Activated naive CD4-positive, alpha-beta T cell treated with anti-CD3 and anti-CD28 coated beads for 36 hours (primary cell): ENCODE measurements at regions of chr10 and their contacts with region 1.

Region 1: DNA sequence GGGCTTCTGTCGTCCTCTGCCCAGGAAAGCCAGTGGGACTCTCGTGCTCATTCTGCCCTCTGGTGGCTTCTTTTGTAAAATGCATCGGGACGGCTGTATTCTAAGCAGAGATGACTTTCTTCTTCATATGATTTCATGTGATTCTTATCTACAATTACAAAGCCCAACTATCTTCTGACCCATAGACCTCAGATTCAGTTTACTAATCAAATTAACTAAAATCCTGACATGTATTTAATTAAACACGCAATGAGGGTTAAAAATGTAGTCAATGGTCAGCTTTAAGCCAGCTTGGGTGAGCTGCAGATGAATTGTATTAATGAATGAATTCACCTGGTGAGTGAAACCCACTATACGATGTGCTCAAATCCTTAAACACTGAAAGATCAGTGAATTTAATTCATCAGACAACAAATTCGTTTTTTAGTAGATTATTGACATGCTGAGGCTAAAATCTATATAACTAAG is 117.6 kb upstream of the FAM204A start:
- DNase-seq: peak; percentile 76
- H3K4me3 Mint-ChIP-seq: no peak overlapping the region
- H3K27ac Mint-ChIP-seq: no peak overlapping the region
- H3K4me1 Mint-ChIP-seq: peaks cover 5% of the 10 kb centered on the region
- H3K27me3 Mint-ChIP-seq: peaks cover 19% of the 10 kb centered on the region

Region 2: GRCh38 chr10:118341791-118342637 is 117.7 kb before region 1 on chr10 and contains the start of gene FAM204A:
- CTCF ChIA-PET with region 1: interaction called, 3 read pairs
- intact Hi-C with region 1: loop called (anchors 1 kb)
- DNase-seq: peak; percentile 98
- H3K4me3 Mint-ChIP-seq: peak within 1 kb of the TSS; percentile 95
- H3K27ac Mint-ChIP-seq: peak within 1 kb of the TSS; percentile 86
- H3K4me1 Mint-ChIP-seq: peaks cover 41% of the 10 kb centered on the region
- H3K27me3 Mint-ChIP-seq: no peaks in the 10 kb centered on the region
- total RNA-seq, gene FAM204A: 60.5 to 67.1 TPM

Region 3: DNA sequence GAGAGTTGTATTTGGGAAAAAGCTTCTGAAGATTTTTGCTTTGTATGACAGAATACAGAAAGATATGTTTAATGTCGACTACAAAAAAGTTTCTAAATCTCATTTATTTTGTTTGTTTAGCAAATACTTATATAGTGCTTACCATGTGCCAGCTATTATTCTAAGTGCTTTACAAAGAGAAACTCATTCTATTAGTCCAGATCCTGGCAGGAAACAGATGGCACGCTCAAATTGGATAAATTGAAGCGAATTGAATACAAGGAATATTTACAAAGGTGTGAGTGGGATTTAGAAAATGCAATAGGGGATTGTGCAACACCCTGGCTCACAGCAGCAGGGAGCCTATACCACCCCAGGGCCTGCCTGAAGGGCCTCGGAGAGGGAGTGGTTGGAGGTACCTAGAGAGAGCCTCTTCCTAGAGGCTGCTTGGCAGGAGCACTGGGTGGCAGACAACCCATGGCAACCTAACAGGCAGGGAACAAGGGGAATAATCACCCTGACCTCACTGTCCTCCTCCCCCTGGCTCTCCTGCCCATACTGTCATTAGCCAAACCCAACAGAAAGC is 90.0 kb before region 1 on chr10:
- CTCF ChIA-PET with region 1: no interaction called
- intact Hi-C with region 1: no loop called
- DNase-seq: no peak
- H3K4me3 Mint-ChIP-seq: no peak overlapping the region
- H3K27ac Mint-ChIP-seq: no peak overlapping the region
- H3K4me1 Mint-ChIP-seq: no peaks in the 10 kb centered on the region
- H3K27me3 Mint-ChIP-seq: peaks cover 18% of the 10 kb centered on the region

Region 4: DNA sequence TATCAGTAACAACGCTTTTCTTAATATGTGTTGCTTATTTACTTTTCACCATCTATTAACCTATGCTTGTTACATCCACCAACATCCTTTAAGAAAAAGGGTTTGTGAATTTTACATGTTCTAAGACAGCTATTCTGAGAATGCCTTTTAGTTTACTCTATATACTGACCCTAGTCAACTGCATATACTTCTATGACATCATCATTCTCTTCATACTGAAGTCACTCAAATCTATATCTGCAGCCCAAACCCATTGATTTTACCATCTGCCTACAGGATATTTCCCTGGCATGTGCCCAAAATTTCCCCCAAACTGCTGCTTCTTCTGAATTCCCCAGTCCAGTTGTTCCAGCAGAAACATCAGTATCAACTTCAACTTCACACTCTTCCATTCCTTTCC is 23.0 kb before region 1 on chr10:
- CTCF ChIA-PET with region 1: interaction called, 14 read pairs
- intact Hi-C with region 1: no loop called
- DNase-seq: no peak
- H3K4me3 Mint-ChIP-seq: no peak overlapping the region
- H3K27ac Mint-ChIP-seq: no peak overlapping the region
- H3K4me1 Mint-ChIP-seq: no peaks in the 10 kb centered on the region
- H3K27me3 Mint-ChIP-seq: peaks cover 35% of the 10 kb centered on the region

Region 5: DNA sequence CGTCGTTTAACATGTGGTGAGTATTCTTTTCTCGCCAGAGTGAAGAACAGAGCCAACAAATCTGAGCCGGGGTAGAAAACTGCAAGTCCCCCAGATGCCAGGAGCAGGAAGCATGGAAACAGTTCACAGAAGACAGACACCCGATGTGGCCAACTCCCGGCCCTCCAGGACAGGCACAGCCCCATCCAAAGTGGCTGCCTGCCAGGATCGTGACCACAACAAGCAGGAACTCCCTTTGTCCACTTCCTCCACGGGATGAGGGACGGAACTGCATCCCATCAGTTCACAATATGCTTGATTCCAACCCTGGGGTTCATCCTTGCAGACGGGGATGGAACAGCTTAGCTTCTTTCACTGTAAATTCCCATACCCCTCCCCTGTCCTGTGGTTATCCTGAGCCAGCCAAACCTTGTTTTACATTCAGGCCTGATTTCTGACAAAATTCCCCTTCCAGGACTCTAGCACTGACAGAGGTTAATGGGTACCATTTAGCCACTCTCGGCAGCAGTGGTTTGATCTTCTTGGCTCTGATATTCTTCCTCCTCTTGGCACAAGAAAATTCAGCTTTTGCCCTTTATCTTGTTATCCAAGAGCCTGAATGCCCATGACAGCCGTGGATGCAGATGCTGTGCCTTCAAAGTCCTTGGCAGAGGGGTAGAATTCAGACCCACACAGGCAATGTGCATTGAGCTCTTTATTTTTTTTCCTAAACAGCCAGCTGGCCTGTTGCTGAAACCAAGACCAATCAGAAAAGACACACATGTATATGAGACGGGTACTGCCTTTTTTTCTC is 12.1 kb before region 1 on chr10:
- CTCF ChIA-PET with region 1: interaction called, 20 read pairs
- intact Hi-C with region 1: no loop called
- DNase-seq: no peak
- H3K4me3 Mint-ChIP-seq: no peak overlapping the region
- H3K27ac Mint-ChIP-seq: no peak overlapping the region
- H3K4me1 Mint-ChIP-seq: no peaks in the 10 kb centered on the region
- H3K27me3 Mint-ChIP-seq: peaks cover 13% of the 10 kb centered on the region

Region 6: GRCh38 chr10:118471863-118472262 is 12.1 kb after region 1 on chr10:
- CTCF ChIA-PET with region 1: interaction called, 15 read pairs
- intact Hi-C with region 1: no loop called
- DNase-seq: no peak
- H3K4me3 Mint-ChIP-seq: no peak overlapping the region
- H3K27ac Mint-ChIP-seq: no peak overlapping the region
- H3K4me1 Mint-ChIP-seq: no peaks in the 10 kb centered on the region
- H3K27me3 Mint-ChIP-seq: peaks cover 24% of the 10 kb centered on the region

Region 7: GRCh38 chr10:118543714-118544400 is 84.1 kb after region 1 on chr10:
- CTCF ChIA-PET with region 1: interaction called, 3 read pairs
- intact Hi-C with region 1: loop called (anchors 5 kb)
- DNase-seq: peak; percentile 70
- H3K4me3 Mint-ChIP-seq: no peak overlapping the region
- H3K27ac Mint-ChIP-seq: no peak overlapping the region
- H3K4me1 Mint-ChIP-seq: no peaks in the 10 kb centered on the region
- H3K27me3 Mint-ChIP-seq: peaks cover 42% of the 10 kb centered on the region